Uterus (tissue), 4 donors: ENCODE measurements at regions of chr2 and their contacts with region 1.

Region 1: GRCh38 chr2:120312861-120313694 is 32.9 kb upstream of the INHBB start:
- DNase-seq: peak; percentile 84 to 85
- H3K4me3 ChIP-seq: peak overlapping the region; percentile 33 to 42
- H3K27ac ChIP-seq: peak overlapping the region; percentile 61 to 68
- H3K4me1 ChIP-seq: no peaks in the 10 kb centered on the region
- H3K27me3 ChIP-seq: no peaks in the 10 kb centered on the region
- CTCF ChIP-seq: peak; percentile 85 to 88 (median 87)
- POLR2A ChIP-seq: no peak

Region 2: DNA sequence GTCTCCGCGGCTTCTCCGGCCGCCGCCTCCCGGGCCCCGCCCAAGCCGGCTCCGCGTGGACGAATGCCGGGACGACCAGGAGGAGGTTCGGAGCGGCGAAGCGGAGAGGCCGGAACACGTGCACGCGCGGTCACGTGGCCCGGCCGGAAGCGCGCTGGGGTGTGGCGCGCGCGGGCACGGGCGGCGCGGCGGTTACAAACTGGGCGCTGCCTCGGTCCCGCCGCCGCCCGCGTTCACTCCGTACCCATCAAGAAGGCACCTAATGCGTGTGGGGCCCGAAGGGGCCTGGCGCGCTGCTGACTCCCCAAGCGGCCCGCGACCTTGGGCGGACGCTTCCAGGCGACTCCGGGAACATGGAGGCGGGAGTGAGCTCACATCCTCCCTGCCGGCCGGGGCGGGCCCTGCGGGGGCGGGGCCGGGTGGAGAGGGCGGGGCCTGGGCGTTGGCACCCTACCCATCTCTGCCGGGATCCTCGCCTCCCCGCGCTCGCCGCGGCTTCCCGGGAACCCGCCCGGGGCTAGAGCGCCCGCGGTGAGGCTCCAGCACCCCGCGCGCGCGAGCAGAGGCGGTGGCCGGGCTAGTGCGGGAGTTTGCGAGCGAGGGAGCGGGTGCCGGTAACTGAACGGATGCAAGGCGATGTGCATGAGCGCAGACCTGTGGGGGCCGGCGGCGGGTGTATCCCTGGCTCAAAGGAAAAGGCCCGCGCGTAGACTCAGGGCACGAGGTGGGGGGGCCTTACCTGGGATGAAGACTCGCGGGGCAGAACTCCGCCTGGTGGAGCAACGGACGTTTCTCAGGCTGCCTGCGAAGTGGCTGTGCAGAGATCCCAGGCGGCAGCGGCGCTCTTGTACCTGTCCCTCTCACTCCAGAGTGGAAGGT is 89.8 kb before region 1 on chr2 and contains the start of gene TMEM185B:
- intact Hi-C with region 1: loop called (anchors 10 kb)
- DNase-seq: peak; percentile 85 to 95
- H3K4me3 ChIP-seq: peak within 1 kb of the TSS; percentile 57 to 58
- H3K27ac ChIP-seq: peak within 1 kb of the TSS; percentile 83 to 87
- H3K4me1 ChIP-seq: no peaks in the 10 kb centered on the region
- H3K27me3 ChIP-seq: no peaks in the 10 kb centered on the region
- CTCF ChIP-seq: peak in 2 of 4 experiments; percentile 35 to 39
- POLR2A ChIP-seq: peak; percentile 38 to 75
- total RNA-seq, gene TMEM185B: 11.5 to 34.6 (median 22.0) TPM

Region 3: DNA sequence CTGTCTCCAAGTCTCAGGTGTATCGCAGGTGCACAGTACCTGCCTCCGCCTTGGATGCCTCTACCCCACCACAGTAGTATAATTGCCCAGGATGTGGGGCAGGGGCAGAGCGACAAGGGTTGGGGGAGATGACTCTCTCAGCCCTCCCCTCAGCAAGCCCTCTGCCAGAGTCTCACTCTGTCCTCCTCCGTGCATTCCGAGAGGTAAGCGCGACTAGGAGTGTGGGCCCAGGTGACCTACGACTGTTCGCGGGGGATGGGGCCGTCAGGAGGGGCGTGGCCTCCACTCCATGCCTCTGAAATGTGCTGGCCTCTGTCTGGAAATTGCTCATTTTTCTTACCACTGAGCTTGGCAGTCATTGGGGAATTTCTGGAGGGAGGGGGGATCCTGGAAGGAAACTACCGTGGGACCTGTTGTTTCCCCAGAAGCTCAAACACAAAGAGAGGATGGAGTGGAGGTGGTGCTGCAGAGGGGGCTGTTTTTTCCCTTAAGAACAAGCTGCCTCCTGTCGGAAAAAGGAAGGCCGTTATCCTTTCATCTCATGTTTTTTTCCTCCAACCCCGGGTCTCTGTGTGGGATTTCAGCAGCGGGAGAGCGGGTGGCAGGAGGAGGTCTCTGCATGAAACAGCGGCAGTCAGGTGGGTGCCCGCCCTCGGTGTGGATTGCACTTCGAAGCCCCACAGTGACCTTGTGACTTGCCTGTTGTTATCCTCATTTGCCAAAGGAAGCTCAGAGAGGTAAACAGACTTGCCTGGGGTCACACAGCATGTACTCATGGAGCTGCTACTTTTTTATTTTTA is 73.4 kb before region 1 on chr2:
- intact Hi-C with region 1: no loop called
- DNase-seq: peak; percentile 62 to 79
- H3K4me3 ChIP-seq: no peak overlapping the region
- H3K27ac ChIP-seq: peak overlapping the region; percentile 54 to 61
- H3K4me1 ChIP-seq: no peaks in the 10 kb centered on the region
- H3K27me3 ChIP-seq: no peaks in the 10 kb centered on the region
- CTCF ChIP-seq: no peak
- POLR2A ChIP-seq: no peak